GM18951 (cell line): ENCODE measurements at regions of chr5 and their contacts with region 1.

Region 1: GRCh38 chr5:76601470-76601869 is 21.7 kb downstream of the F2RL2 start:
- POLR2A ChIP-seq: no peak

Region 2: DNA sequence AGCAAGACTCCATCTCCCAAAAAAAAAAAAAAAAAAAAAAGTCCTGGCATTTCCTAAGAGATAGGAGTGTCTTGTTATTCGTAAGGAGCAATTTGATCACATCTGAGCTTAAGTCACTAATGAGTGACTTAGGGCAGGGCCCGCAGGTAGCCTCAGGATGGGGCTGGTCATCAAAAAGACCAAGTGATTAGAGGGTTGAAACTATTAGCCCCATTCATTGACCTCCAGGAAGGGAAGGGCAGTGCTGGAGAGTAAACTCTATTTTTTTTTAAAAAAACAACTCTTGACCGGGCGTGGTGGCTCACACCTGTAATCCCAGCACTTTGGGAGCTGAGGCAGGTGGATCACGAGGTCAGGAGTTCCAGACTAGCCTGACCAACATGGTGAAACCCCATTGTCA is 244.6 kb before region 1 on chr5:
- in situ Hi-C with region 1: no loop called
- POLR2A ChIP-seq: no peak

Region 3: DNA sequence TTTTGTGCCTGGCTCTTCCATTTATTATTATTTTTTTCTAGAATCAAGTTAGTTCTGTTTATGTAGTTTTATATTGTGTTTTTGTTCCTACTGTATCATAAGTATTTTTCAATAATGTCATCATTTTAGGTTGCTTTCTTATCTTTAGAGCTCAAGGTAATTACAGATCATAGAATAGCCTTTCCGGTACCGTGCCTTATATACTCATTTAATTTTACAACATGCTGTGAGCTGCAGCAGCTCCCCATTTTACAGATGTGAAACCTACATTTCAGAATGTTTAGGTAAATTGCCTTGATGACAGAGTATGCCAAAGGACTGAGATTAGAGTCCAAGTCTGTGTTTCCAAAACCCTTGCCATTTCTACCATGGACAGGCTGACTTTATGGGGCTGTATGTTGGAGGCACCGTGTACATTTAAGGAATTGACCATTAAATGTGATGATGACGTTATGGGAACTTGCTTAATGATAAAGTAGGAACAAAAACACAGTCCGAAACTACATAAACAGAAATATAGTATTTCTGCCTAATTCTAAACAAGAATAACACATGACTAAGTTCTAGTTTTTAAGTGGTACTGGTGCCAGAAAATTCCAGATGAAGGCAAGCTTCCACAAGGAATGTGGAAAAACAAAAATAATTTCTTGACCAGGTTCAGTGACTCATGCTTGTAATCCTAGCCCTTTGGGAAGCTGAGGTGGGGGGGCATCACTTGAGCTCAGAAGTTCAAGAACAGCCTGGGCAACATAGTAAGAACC is 100.7 kb before region 1 on chr5:
- in situ Hi-C with region 1: no loop called
- POLR2A ChIP-seq: no peak

Region 4: GRCh38 chr5:76691467-76692138 is 90.1 kb after region 1 on chr5:
- in situ Hi-C with region 1: no loop called
- POLR2A ChIP-seq: no peak

Region 5: DNA sequence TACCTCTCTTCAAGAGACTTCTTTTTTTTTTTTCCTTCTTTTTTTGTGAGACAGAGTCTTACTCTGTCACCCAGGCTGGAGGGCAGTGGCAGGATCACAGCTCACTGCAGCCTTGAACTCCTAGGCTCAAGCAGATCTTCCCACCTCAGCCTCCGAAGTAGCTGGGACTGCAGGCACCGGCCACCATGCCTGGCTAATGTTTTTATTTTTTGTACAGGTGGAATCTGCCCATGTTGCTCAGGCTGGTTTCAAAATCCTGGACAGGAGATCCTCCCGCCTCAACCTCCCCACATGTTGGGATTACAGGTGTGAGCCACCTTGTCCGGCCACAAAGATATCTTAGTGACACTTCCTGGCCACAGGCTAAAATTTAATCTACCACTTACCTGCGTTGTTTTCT is 174.5 kb after region 1 on chr5:
- in situ Hi-C with region 1: loop called (anchors 5 kb)
- POLR2A ChIP-seq: no peak

Region 6: GRCh38 chr5:78041805-78042204 is 1440.3 kb after region 1 on chr5:
- in situ Hi-C with region 1: no loop called
- POLR2A ChIP-seq: no peak